Activated CD8-positive, alpha-beta memory T cell treated with anti-CD3 and anti-CD28 coated beads, Interleukin-2, amount 10 ng/mL, durations not matched to agents 7 days and 5 days (primary cell): ENCODE measurements at regions of chr2 and their contacts with region 1.

Region 1: DNA sequence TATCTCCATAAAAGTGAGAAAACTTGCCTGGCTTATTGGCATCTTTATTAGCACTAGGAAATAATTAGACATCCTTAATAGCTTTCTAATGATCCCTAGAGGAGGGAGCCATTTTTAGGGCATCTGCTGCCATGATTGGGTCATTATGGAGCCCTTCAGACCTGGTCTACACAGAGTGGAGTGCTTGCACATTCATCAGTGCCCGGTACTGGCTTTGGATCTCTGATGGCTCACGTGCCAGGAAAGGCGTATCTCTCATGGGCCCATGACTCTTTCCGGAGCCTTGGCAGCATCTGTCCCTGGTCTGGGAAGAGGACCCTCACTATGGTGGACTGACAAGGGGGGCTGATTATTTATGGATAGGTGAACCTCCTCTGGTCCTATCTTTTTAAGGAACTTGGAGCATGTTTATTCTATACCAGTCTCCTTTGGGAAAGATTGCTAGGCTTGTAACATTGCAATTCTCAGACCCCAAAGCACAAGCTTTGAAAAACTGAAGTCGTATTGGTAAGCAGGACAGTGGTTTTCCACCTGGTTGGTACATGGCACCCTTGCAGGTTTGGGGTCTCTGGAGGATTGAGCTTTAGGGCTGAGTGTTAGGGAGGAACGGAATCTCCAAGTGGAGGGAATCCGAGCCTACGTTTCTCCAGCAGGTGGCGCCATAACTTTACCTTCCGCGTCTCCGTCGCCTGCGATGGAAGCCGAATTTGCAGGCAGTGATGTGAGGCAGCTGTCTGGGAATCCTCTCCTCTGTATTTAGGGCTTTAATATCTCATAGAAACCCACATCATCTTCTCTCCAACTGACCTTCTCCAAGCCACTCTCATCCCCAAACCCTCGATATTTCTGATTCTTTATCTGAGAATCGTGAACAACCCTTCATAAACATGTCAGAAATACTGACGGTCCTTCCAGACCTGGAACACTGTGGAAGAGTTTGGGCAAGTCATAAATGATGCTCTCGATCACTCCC is 27.8 kb downstream of the SIX2 start:
- DNase-seq: peak; percentile 67
- ATAC-seq: peak; percentile 30
- H3K4me3 Mint-ChIP-seq: no peak overlapping the region
- H3K27ac Mint-ChIP-seq: no peak overlapping the region
- H3K4me1 Mint-ChIP-seq: no peaks in the 10 kb centered on the region
- H3K27me3 Mint-ChIP-seq: peaks cover 14% of the 10 kb centered on the region

Region 2: DNA sequence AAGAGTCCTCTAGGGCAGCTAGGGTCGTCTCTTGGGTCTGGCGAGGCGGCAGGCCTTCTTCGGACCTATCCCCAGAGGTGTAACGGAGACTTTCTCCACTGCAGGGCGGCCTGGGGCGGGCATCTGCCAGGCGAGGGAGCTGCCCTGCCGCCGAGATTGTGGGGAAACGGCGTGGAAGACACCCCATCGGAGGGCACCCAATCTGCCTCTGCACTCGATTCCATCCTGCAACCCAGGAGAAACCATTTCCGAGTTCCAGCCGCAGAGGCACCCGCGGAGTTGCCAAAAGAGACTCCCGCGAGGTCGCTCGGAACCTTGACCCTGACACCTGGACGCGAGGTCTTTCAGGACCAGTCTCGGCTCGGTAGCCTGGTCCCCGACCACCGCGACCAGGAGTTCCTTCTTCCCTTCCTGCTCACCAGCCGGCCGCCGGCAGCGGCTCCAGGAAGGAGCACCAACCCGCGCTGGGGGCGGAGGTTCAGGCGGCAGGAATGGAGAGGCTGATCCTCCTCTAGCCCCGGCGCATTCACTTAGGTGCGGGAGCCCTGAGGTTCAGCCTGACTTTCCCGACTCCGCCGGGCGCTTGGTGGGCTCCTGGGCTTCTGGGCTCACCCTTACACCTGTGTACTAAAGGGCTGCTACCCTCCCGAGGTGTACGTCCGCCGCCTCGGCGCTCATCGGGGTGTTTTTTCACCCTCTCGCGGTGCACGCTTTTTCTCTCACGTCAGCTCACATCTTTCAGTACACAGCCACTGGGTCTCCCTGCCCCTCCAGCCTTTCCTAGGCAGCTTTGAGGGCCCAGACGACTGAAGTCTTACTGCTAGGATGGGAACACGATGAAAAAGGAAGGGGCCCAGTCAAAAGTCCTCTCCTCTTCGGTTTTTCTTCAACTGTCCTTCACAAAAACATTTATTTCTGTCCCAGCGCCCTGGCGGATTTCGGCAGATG is 19.8 kb after region 1 on chr2:
- CTCF ChIA-PET with region 1: interaction called, 27 read pairs
- DNase-seq: no peak
- ATAC-seq: peak; percentile 20
- H3K4me3 Mint-ChIP-seq: no peak overlapping the region
- H3K27ac Mint-ChIP-seq: no peak overlapping the region
- H3K4me1 Mint-ChIP-seq: peaks cover 17% of the 10 kb centered on the region
- H3K27me3 Mint-ChIP-seq: peaks cover 92% of the 10 kb centered on the region

Region 3: GRCh38 chr2:45009303-45009927 is 28.0 kb after region 1 on chr2 and contains the start of gene SIX2:
- CTCF ChIA-PET with region 1: interaction called, 10 read pairs
- DNase-seq: no peak
- ATAC-seq: peak; percentile 21
- H3K4me3 Mint-ChIP-seq: peak within 1 kb of the TSS; percentile 63
- H3K27ac Mint-ChIP-seq: no peak within 1 kb of the TSS
- H3K4me1 Mint-ChIP-seq: peaks cover 23% of the 10 kb centered on the region
- H3K27me3 Mint-ChIP-seq: peaks cover 84% of the 10 kb centered on the region
- total RNA-seq, gene SIX2: not detected

Region 4: DNA sequence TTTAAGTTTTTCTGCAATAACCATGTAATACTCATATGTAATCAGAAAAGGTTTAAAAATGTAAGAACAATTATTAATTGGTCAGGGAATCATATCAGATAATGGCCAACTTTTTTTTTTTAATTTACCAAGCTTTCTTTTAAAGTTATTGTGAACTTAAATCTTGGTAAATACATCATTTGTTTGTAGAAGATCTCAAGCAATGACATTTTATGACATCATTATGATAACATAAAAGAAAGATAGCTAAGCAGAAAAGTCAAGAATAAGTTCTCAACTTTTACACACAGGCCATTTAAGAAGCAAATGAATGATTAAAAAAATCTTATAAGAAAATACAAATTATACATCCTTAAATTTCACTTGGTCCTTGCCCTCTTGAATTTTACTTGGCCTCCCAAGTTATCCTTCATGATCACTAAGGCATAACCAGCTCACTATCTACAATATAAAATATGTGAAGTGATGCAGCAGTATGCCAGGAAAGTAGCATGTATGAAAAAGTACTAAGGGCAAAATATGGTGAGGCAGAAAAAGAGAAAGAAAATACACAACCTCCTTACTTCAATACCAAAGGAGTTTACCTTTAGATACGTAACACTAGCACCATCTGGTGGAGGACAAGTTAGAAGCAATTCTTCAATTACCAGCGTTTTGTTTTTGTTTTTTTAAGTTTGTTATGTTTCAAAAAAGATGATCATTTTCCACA is 513.0 kb after region 1 on chr2:
- CTCF ChIA-PET with region 1: interaction called, 59 read pairs
- DNase-seq: no peak
- ATAC-seq: no peak
- H3K4me3 Mint-ChIP-seq: no peak overlapping the region
- H3K27ac Mint-ChIP-seq: no peak overlapping the region
- H3K4me1 Mint-ChIP-seq: peaks cover 32% of the 10 kb centered on the region
- H3K27me3 Mint-ChIP-seq: no peaks in the 10 kb centered on the region

Region 5: DNA sequence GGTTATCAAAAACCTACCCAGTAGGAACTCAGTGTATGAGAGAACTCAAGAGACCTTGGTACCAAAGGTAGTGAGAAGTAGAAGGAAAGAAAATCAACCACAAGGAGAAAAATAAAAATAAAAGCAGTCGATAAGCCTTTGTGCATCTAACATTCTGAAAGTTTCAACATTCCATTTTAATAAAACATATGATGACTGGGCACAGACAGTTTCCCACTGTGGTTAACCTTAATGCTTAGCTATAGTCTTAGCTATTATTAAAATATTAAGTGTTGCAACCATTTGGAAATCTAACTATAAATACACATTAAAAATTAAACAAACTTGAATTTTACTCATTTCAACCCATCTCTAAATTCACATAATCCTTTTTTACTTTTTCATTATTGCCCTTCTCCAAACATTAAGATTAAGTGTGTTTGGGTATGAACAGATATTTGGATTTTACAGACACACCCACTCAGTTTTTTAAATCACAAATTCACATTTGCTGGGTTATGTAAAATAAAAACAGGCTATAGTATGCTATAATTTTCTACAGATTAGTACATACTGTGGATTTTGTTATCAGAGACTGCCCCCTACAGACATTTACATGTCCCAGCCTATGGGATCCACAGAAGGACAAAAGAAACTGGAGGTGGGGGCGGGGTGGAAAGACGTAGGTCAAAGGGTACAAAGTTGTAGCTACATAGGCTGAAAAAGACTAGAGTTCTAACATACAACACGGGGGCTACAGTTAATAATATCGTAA is 596.8 kb after region 1 on chr2:
- CTCF ChIA-PET with region 1: interaction called, 10 read pairs
- DNase-seq: no peak
- ATAC-seq: peak; percentile 72
- H3K4me3 Mint-ChIP-seq: no peak overlapping the region
- H3K27ac Mint-ChIP-seq: no peak overlapping the region
- H3K4me1 Mint-ChIP-seq: peaks cover 4% of the 10 kb centered on the region
- H3K27me3 Mint-ChIP-seq: no peaks in the 10 kb centered on the region